CD8-positive, alpha-beta T cell (primary cell): ENCODE measurements at regions of chr5 and their contacts with region 1.

Region 1: GRCh38 chr5:1174122-1174936 is 27.1 kb upstream of the SLC6A19 start:
- DNase-seq: peak in 6 of 9 experiments; percentile 29 to 70 (median 56)
- ATAC-seq: peak; percentile 38
- H3K4me3 ChIP-seq: no peak overlapping the region
- H3K4me3 Mint-ChIP-seq: no peak overlapping the region
- H3K27ac ChIP-seq: no peak overlapping the region
- H3K27ac Mint-ChIP-seq: no peak overlapping the region
- H3K4me1 ChIP-seq: no peaks in the 10 kb centered on the region
- H3K4me1 Mint-ChIP-seq: peaks cover 9% of the 10 kb centered on the region
- H3K27me3 ChIP-seq: no peaks in the 10 kb centered on the region
- H3K27me3 Mint-ChIP-seq: no peaks in the 10 kb centered on the region
- CTCF ChIP-seq: peak; percentile 55

Region 2: DNA sequence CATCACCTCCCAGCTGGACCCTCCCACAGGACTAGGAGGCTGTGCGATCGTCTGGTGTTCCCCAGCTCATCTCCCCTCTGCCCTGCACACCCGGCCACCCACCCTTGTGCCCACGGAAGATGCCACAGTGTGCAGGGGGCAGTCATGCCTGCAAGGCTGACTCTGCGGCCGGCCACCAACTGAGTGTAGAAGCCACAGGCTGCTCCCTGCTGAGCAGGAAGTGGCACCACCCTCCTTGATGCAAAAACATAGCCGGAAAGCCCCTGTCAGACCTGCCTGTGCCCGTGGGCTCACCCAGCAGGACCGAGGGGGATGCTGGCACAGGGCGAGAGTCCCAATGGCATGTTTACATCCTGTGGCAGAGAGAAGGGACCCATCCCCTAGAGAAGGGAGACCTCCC is 22.2 kb before region 1 on chr5:
- CTCF ChIA-PET with region 1: interaction called, 20 read pairs
- POLR2A ChIA-PET with region 1: no interaction called
- intact Hi-C with region 1: no loop called
- DNase-seq: peak in 7 of 9 experiments; percentile 19 to 73 (median 59)
- ATAC-seq: peak; percentile 69
- H3K4me3 ChIP-seq: peak overlapping the region in 1 of 2 experiments; percentile 35
- H3K4me3 Mint-ChIP-seq: peak overlapping the region; percentile 45
- H3K27ac ChIP-seq: no peak overlapping the region
- H3K27ac Mint-ChIP-seq: peak overlapping the region; percentile 74
- H3K4me1 ChIP-seq: peaks cover 45% of the 10 kb centered on the region
- H3K4me1 Mint-ChIP-seq: peaks cover 35% of the 10 kb centered on the region
- H3K27me3 ChIP-seq: peaks cover 0 to 16% of the 10 kb centered on the region in 2 experiments
- H3K27me3 Mint-ChIP-seq: peaks cover 21% of the 10 kb centered on the region
- CTCF ChIP-seq: no peak

Region 3: GRCh38 chr5:1161833-1162229 is 12.5 kb before region 1 on chr5:
- CTCF ChIA-PET with region 1: interaction called, 11 read pairs
- POLR2A ChIA-PET with region 1: no interaction called
- intact Hi-C with region 1: no loop called
- DNase-seq: no peak
- ATAC-seq: no peak
- H3K4me3 ChIP-seq: no peak overlapping the region
- H3K4me3 Mint-ChIP-seq: no peak overlapping the region
- H3K27ac ChIP-seq: no peak overlapping the region
- H3K27ac Mint-ChIP-seq: no peak overlapping the region
- H3K4me1 ChIP-seq: no peaks in the 10 kb centered on the region
- H3K4me1 Mint-ChIP-seq: no peaks in the 10 kb centered on the region
- H3K27me3 ChIP-seq: peaks cover 0 to 6% of the 10 kb centered on the region in 2 experiments
- H3K27me3 Mint-ChIP-seq: peaks cover 26% of the 10 kb centered on the region
- CTCF ChIP-seq: no peak